HepG2 (cell line): ENCODE measurements at regions of chr2 and their contacts with region 1.

Region 1: GRCh38 chr2:235595422-235596010 is 101.7 kb downstream of the AGAP1 start:
- DNase-seq: peak; percentile 68
- ATAC-seq: peak; percentile 53
- H3K4me3 ChIP-seq: no peak overlapping the region
- H3K27ac ChIP-seq: no peak overlapping the region
- H3K4me1 ChIP-seq: peaks cover 44% of the 10 kb centered on the region
- H3K27me3 ChIP-seq: no peaks in the 10 kb centered on the region
- CTCF ChIP-seq: peak; percentile 94
- EP300 ChIP-seq: no peak
- POLR2A ChIP-seq: no peak
- RAD21 ChIP-seq: peak; percentile 78

Region 2: DNA sequence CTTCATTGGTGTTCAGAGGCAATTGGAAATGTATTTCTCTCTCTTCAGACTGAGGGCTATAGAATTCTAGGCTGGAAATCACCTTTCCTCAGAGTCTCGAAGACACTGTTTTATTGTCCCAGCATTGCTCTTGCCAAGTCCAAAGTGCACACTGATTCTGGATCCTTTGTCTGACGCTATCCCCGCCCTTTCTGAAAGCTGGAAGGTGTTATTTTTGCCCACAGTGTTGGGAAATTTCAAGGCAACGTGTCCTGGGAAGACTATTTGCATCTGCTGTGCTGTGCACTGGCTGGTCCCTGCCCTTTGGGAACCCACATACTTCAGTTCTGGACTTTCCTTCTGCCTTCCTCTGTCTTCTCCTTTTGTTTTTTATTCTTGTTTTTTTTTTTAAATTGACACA is 452.9 kb before region 1 on chr2:
- CTCF ChIA-PET with region 1: no interaction called
- POLR2A ChIA-PET with region 1: no interaction called
- in situ Hi-C with region 1: loop called (anchors 5 kb)
- intact Hi-C with region 1: no loop called
- DNase-seq: peak; percentile 18
- ATAC-seq: no peak
- H3K4me3 ChIP-seq: no peak overlapping the region
- H3K27ac ChIP-seq: no peak overlapping the region
- H3K4me1 ChIP-seq: peaks cover 6% of the 10 kb centered on the region
- H3K27me3 ChIP-seq: peaks cover 0 to 45% of the 10 kb centered on the region in 2 experiments; a peak in 4 of 5 replicates
- CTCF ChIP-seq: no peak
- EP300 ChIP-seq: no peak
- POLR2A ChIP-seq: no peak
- RAD21 ChIP-seq: no peak

Region 3: GRCh38 chr2:235352541-235352940 is 243.0 kb before region 1 on chr2:
- CTCF ChIA-PET with region 1: no interaction called
- POLR2A ChIA-PET with region 1: no interaction called
- in situ Hi-C with region 1: no loop called
- intact Hi-C with region 1: no loop called
- DNase-seq: no peak
- ATAC-seq: no peak
- H3K4me3 ChIP-seq: no peak overlapping the region
- H3K27ac ChIP-seq: no peak overlapping the region
- H3K4me1 ChIP-seq: no peaks in the 10 kb centered on the region
- H3K27me3 ChIP-seq: peaks cover 2 to 57% of the 10 kb centered on the region in 2 experiments; a peak in 4 of 5 replicates
- CTCF ChIP-seq: no peak
- EP300 ChIP-seq: no peak
- POLR2A ChIP-seq: no peak
- RAD21 ChIP-seq: no peak

Region 4: GRCh38 chr2:235493775-235494715 is 101.5 kb before region 1 on chr2 and contains the start of gene AGAP1:
- CTCF ChIA-PET with region 1: no interaction called
- POLR2A ChIA-PET with region 1: no interaction called
- in situ Hi-C with region 1: no loop called
- intact Hi-C with region 1: loop called (anchors 5 kb)
- DNase-seq: peak; percentile 74
- ATAC-seq: peak; percentile 82
- H3K4me3 ChIP-seq: peak within 1 kb of the TSS; percentile 74 to 86 (median 75)
- H3K27ac ChIP-seq: peak within 1 kb of the TSS; percentile 35
- H3K4me1 ChIP-seq: peaks cover 49% of the 10 kb centered on the region
- H3K27me3 ChIP-seq: peaks cover 0 to 14% of the 10 kb centered on the region in 2 experiments; a peak in 2 of 5 replicates
- CTCF ChIP-seq: no peak
- EP300 ChIP-seq: no peak
- POLR2A ChIP-seq: peak in 1 of 2 experiments; percentile 50; a peak in 1 of 4 replicates
- RAD21 ChIP-seq: peak; percentile 2; the same call in 1 of the 2 replicates
- total RNA-seq, gene AGAP1: 21.2 and 21.3 TPM in 2 replicates

Region 5: DNA sequence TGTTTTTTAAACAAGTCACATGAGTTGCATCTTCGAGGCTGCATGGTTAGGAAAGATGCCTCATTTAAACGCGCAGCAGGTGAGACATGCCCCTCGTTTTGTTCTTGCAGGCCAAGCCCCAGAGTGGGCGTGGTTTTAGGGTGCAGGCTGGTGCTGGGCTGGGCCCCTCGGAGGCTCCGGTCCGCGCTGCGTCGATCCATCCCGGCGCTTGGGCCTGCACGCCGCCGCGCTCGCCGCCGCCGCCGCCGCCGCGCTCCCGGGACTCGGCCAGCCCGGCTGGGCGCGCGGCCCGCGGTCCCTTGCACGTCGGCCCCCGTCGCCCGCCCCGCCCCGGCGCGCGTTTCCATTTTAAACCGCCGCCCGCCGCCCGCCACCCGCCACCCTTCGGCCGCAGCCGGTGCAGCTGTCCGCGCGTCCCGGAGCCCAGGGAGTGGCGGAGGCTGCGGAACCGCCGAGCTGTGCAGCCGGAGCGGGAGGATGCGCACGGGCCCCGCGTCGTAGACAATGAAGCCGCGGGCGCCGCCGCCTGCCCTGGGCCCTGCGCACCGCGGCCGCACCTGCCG is 73.8 kb after region 1 on chr2:
- CTCF ChIA-PET with region 1: interaction called, 7 read pairs
- POLR2A ChIA-PET with region 1: no interaction called
- in situ Hi-C with region 1: no loop called
- intact Hi-C with region 1: loop called (anchors 5 kb)
- DNase-seq: peak; percentile 69
- ATAC-seq: peak; percentile 77
- H3K4me3 ChIP-seq: peak overlapping the region; percentile 63 to 82 (median 66); a peak in 5 of 6 replicates
- H3K27ac ChIP-seq: no peak overlapping the region
- H3K4me1 ChIP-seq: peaks cover 53% of the 10 kb centered on the region
- H3K27me3 ChIP-seq: no peaks in the 10 kb centered on the region
- CTCF ChIP-seq: no peak
- EP300 ChIP-seq: no peak
- POLR2A ChIP-seq: no peak
- RAD21 ChIP-seq: no peak